ENCODE measurements at regions of chr11 and their contacts with region 1.

Region 1: GRCh38 chr11:73335204-73335923 is 27.3 kb downstream of the ARHGEF17 start:
- DNase-seq: peak; percentile 76 to 85
- ATAC-seq: peak; percentile 79 to 96 (median 93)
- H3K4me3 ChIP-seq: no peak overlapping the region
- H3K4me3 Mint-ChIP-seq: no peak overlapping the region
- H3K27ac ChIP-seq: no peak overlapping the region
- H3K27ac Mint-ChIP-seq: no peak overlapping the region
- H3K4me1 ChIP-seq: no peaks in the 10 kb centered on the region
- H3K4me1 Mint-ChIP-seq: no peaks in the 10 kb centered on the region
- H3K27me3 ChIP-seq: no peaks in the 10 kb centered on the region
- H3K27me3 Mint-ChIP-seq: peaks cover 0 to 3% of the 10 kb centered on the region in 2 donors
- CTCF ChIP-seq: peak; percentile 98

Region 2: DNA sequence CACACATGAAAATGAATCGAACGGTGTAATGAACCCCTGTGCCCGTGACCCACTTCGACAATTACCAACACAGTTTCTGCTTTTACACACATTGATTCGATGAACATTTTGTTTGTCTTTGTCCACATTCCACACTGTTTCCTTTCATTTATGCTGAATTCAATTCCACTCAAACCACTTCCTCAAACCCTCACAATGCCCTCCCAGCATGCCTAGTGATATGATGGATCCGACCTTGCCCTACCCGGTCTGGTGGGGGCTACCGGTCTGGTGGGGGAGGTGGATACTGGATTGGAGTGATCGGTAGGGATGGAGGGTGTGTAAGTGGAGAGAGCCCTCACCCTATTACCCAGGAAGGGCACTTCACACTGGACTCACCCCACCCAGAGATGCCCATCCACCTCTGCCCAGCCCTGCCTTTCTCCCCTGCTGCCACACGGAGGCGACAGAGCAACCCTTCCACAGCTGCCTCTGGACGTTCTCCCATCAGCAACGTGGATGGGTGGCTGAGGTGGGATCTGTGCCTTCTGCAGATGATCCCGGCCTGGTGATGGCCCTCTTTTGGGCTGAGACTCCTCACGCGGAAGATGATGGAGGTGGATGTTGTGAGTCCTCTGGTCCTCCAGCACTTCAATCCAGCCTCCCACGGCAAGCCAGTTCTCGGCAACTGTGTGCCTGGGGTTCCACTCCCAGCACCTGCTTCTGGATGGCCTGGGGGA is 150.3 kb before region 1 on chr11:
- intact Hi-C with region 1: loop called (anchors 2 kb)
- DNase-seq: peak; percentile 44 to 63
- ATAC-seq: peak; percentile 75 to 88 (median 82)
- H3K4me3 ChIP-seq: no peak overlapping the region
- H3K4me3 Mint-ChIP-seq: no peak overlapping the region
- H3K27ac ChIP-seq: no peak overlapping the region
- H3K27ac Mint-ChIP-seq: no peak overlapping the region
- H3K4me1 ChIP-seq: peaks cover 35% of the 10 kb centered on the region
- H3K4me1 Mint-ChIP-seq: peaks cover 5 to 6% of the 10 kb centered on the region in 2 donors
- H3K27me3 ChIP-seq: no peaks in the 10 kb centered on the region
- H3K27me3 Mint-ChIP-seq: peaks cover 12 to 14% of the 10 kb centered on the region in 2 donors
- CTCF ChIP-seq: peak; percentile 75

Region 3: GRCh38 chr11:73198677-73199076 is 136.7 kb before region 1 on chr11:
- intact Hi-C with region 1: no loop called
- DNase-seq: no peak
- ATAC-seq: no peak
- H3K4me3 ChIP-seq: no peak overlapping the region
- H3K4me3 Mint-ChIP-seq: no peak overlapping the region
- H3K27ac ChIP-seq: no peak overlapping the region
- H3K27ac Mint-ChIP-seq: no peak overlapping the region
- H3K4me1 ChIP-seq: no peaks in the 10 kb centered on the region
- H3K4me1 Mint-ChIP-seq: no peaks in the 10 kb centered on the region
- H3K27me3 ChIP-seq: no peaks in the 10 kb centered on the region
- H3K27me3 Mint-ChIP-seq: peaks cover 0 to 9% of the 10 kb centered on the region in 2 donors
- CTCF ChIP-seq: no peak

Region 4: GRCh38 chr11:73236854-73237253 is 98.5 kb before region 1 on chr11:
- intact Hi-C with region 1: no loop called
- DNase-seq: peak in 1 of 2 donors; percentile 37
- ATAC-seq: peak in 2 of 3 donors; percentile 46 to 62
- H3K4me3 ChIP-seq: no peak overlapping the region
- H3K4me3 Mint-ChIP-seq: no peak overlapping the region
- H3K27ac ChIP-seq: no peak overlapping the region
- H3K27ac Mint-ChIP-seq: no peak overlapping the region
- H3K4me1 ChIP-seq: no peaks in the 10 kb centered on the region
- H3K4me1 Mint-ChIP-seq: no peaks in the 10 kb centered on the region
- H3K27me3 ChIP-seq: no peaks in the 10 kb centered on the region
- H3K27me3 Mint-ChIP-seq: peaks cover 0 to 3% of the 10 kb centered on the region in 2 donors
- CTCF ChIP-seq: peak; percentile 21

Region 5: DNA sequence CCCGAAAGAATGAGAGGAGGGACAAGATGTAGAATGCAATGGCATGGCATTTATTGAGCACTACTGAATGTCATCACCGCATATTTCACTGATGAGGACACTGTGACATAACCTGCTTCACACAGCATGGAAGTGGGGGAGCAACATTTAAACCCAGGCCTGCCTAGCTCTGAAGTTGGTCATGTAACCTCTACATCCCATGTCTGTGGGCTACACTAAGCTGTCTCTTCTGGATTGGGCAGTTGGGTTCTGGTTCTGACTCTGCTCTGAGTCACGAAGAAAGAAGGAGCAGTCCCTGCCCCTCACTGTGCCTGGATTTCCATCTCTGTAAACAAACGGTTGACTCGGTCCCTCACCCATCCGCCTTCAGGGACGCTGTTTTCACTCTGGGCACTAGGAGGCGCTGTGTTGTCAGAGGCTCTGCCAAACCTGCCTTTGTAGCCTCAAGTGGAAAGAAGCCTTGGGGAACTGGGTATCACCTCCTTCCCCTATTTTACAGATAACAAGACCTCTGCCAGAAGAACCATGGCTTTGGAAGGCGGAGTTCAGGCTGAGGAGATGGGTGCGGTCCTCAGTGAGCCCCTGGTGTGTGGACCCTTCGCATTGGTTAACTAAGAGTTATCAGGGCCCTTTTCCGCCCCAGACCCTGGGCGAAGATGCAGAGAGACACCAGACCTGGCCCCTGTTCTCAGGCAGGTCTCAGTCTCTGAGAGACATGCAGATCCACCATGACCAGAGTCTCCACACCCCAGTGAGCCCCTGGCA is 40.0 kb before region 1 on chr11:
- intact Hi-C with region 1: loop called (anchors 1 kb)
- DNase-seq: peak; percentile 71 to 84
- ATAC-seq: peak; percentile 80 to 95 (median 88)
- H3K4me3 ChIP-seq: no peak overlapping the region
- H3K4me3 Mint-ChIP-seq: no peak overlapping the region
- H3K27ac ChIP-seq: no peak overlapping the region
- H3K27ac Mint-ChIP-seq: no peak overlapping the region
- H3K4me1 ChIP-seq: peaks cover 3% of the 10 kb centered on the region
- H3K4me1 Mint-ChIP-seq: peaks cover 0 to 9% of the 10 kb centered on the region in 2 donors
- H3K27me3 ChIP-seq: no peaks in the 10 kb centered on the region
- H3K27me3 Mint-ChIP-seq: peaks cover 0 to 5% of the 10 kb centered on the region in 2 donors
- CTCF ChIP-seq: peak; percentile 86

Region 6: DNA sequence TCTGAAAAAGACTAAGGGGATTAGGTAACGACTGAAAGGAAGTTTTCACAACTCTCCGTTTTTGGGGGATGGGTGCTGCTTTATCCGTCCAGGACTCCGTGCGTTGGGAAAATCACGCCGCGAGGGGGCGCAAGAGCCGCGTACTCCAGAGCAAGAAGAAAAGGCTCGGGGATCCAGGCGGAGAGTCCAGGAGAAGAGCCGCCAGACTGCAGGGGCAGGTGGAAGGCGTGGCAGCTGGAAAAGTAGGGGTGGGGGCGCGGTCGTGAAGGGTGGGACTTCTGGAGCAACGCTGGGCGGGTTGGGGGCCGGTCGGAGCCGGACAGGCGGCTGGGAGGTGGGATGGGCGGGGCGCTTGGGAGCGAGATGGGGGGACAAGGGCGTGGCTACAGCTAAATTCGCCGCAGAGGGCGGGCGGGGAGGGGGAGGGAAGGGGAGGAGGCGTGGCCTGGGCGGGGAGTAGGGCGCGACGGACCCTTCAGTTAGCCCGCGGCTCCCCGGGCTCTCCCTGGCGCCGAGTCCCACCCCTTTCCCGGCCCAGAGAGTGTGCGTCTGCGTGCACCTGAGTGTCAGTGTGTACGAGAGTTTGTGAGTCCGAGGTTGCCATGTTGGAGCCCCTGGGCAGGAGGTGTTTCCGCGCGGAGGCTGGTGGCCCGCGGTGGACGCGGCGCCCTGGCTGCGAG is 27.9 kb before region 1 on chr11:
- intact Hi-C with region 1: loop called (anchors 1 kb)
- DNase-seq: peak; percentile 85 to 91
- ATAC-seq: peak; percentile 72 to 81 (median 74)
- H3K4me3 ChIP-seq: peak overlapping the region; percentile 59
- H3K4me3 Mint-ChIP-seq: peak overlapping the region; percentile 96
- H3K27ac ChIP-seq: no peak overlapping the region
- H3K27ac Mint-ChIP-seq: peak overlapping the region; percentile 36 to 57
- H3K4me1 ChIP-seq: peaks cover 25% of the 10 kb centered on the region
- H3K4me1 Mint-ChIP-seq: peaks cover 7 to 14% of the 10 kb centered on the region in 2 donors
- H3K27me3 ChIP-seq: peaks cover 12% of the 10 kb centered on the region
- H3K27me3 Mint-ChIP-seq: peaks cover 21 to 35% of the 10 kb centered on the region in 2 donors
- CTCF ChIP-seq: peak; percentile 59

Region 7: GRCh38 chr11:73360336-73361013 is 25.1 kb after region 1 on chr11:
- intact Hi-C with region 1: no loop called
- DNase-seq: peak in 1 of 2 donors; percentile 59
- ATAC-seq: peak in 2 of 3 donors; percentile 47 to 62
- H3K4me3 ChIP-seq: no peak overlapping the region
- H3K4me3 Mint-ChIP-seq: no peak overlapping the region
- H3K27ac ChIP-seq: no peak overlapping the region
- H3K27ac Mint-ChIP-seq: no peak overlapping the region
- H3K4me1 ChIP-seq: peaks cover 4% of the 10 kb centered on the region
- H3K4me1 Mint-ChIP-seq: no peaks in the 10 kb centered on the region
- H3K27me3 ChIP-seq: no peaks in the 10 kb centered on the region
- H3K27me3 Mint-ChIP-seq: no peaks in the 10 kb centered on the region
- CTCF ChIP-seq: no peak